Posterior cingulate gyrus (tissue), 11 donors: ENCODE measurements at regions of chr1 and their contacts with region 1.

Region 1: GRCh38 chr1:53837924-53838652 is at the start of gene NDC1:
- DNase-seq: peak; percentile 86 to 98 (median 90)

Region 2: GRCh38 chr1:53889304-53890298 is 51.5 kb after region 1 on chr1 and contains the start of gene YIPF1:
- intact Hi-C with region 1: loop called (anchors 2 kb)
- DNase-seq: peak; percentile 86 to 99 (median 93)

Region 3: DNA sequence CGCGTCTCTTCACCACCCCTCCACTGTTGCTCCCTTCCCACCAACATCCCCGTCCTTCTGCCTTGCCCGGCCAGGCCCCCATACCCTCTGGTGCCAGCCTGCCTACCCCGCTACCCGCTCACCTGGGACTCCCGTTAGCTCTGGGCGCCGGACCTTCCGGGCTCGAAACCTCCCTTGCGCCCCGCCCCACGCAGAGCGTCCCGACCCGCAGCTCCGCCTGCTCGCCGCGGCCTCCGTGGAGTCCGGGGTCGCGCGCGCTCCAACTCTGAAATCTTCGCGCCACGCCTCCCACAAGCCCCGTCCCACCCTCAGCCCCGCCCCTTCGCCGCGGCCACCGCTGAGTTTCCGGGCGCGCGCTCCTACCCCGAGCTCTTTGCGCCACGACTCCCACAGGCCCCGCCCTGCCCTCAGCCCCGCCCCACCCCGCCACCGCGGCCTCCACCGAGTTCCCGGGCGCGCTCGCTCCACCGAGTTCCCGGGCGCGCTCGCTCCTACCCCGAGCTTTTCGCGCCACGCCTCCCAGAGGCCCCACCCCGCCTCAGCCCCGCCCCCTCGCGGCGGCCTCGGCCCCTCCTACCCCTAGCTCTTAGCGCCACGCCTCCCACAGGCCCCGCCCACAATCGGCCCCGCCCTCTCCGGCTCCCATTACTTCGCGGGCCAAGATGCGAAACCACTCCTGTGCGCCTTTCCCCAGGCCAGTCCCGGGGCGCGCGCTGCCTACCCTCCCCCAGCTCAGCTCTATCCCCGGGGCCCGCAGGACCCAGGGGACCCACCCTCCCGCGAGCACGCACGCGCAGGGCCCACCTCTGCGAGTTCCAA is 107.6 kb after region 1 on chr1 and contains the start of gene IFT25:
- intact Hi-C with region 1: loop called (anchors 5 kb)
- DNase-seq: peak; percentile 93 to 100 (median 98)

Region 4: DNA sequence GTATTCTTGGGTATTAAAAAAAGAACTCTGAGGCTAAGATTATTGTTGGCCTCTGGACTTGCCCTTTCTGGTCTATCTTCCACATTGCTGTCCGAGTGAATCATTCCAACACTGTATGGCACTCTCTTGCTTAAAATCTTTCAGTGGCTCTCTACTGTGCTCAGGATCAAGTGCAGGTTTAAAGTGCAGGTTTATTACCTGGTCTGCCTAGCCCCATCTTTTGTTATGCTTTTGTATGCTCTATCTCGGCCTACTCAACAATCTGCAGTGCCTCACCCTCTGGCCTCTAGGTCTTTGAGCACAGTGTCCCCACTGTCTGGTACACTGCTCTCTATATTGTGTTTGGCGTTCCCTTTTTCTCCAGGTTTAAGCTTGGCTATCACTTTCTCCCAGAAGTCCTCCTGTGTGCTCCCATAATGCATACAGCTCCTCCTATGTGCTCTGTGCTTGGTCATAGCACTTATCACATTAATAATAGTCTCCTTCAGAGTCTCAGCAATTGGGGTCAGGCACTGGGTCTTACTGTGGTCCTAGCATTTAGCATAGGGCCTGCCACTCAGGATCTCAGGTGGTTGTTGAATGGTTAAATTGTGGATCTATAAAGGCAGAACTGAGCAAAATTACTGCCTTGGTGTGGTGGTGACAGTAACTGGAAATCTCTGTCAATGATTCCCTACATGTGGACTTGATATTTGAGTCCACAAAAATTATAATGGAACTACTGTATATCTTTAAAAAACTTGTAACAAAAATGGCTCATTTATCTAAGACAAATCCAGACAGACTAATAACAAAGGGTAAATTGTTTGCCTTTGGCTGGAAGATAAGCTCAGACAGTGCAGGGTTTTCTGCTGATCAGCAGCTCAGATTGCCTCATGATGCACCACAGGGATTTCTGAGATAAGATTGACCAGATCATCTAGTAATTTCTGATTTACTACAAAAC is 190.5 kb after region 1 on chr1:
- intact Hi-C with region 1: no loop called
- DNase-seq: no peak

Region 5: GRCh38 chr1:54052934-54053744 is 215.1 kb after region 1 on chr1 and contains the starts of genes TCEANC2 and TMEM59:
- intact Hi-C with region 1: loop called (anchors 1 kb)
- DNase-seq: peak; percentile 97 to 100 (median 98)

Region 6: DNA sequence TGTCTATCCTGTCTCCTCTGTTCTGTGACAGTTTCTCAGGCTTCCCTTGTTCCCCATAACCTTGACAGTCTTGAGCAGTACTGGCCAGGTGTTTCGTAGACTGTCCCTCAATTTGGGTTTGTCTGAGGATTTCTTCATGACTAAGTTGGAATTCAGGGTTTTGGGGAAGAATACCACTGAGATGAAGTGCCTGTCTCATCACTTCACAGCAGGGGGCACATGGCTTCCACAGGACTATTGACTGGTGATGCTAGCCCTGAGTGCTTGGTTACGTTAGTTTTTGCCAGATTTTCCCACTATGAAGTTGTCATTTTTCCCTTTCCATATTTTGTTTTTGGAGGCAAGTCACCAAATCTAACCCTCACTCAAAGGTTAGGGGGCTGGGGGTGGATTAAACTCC is 269.0 kb after region 1 on chr1:
- intact Hi-C with region 1: no loop called
- DNase-seq: no peak

Region 7: GRCh38 chr1:54125386-54126070 is 287.4 kb after region 1 on chr1:
- intact Hi-C with region 1: no loop called
- DNase-seq: peak in 2 of 10 donors; percentile 69 to 85

Region 8: DNA sequence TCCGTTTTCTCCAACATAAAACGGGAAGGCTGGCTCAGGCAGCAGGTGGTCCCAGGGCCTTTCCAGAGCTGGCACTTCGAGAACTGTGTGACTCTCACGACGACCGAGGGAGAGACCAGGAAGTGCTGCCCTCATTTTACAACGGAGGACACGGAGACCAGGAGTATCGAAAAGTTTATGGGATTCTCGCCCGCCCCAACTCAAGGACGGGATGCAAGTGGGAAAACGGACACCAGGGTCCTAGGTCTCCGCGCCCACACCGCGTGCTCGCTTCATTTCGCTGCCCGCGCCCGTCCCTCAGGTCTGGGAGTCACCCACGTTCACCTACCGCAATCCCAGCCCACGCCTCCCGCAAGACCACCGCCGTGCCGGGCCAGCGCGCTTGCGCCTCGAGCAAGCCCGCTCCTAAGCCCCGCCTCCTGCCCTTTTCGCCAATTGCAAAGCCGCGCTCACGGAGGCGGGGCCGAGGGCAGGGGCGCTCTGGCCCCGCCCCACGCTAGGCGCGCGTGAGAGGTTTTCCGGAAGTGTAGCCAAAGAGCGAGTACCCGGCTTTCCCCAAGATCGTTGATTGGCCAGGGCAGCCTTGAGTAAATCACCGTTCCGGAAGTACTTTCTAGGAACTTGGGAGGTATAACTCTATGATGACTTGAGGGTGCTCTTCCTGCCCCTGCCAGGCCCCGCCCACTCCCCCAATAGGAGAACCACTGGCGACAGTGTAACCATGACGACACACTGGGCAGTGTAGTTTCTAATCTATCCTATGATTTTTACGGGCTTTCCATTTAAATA is 926.2 kb after region 1 on chr1 and contains the start of gene PARS2:
- intact Hi-C with region 1: loop called (anchors 5 kb)
- DNase-seq: peak; percentile 88 to 99 (median 94)